Naive thymus-derived CD4-positive, alpha-beta T cell (primary cell): ENCODE measurements at regions of chr4 and their contacts with region 1.

Region 1: DNA sequence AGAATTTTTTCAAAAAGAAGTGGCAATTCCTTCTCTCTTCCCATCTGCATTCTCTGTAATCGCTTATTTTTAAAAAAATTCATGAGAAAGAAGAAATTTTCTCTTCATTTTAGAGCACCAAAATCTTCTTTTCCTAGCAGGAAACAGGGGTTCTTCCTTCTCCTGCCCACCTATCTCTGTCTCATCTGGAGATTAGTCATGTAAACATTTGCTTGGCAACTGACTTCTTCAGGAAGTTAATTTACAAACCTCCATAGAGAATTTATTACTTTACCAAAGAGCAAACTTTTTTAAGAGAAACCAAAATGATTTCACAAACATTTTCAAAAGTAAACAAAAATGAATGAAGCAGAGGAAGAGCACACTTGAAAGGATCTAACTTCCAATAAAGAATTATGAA is 13.6 kb downstream of the TTC29 start:
- DNase-seq: no peak
- ATAC-seq: no peak
- H3K4me3 ChIP-seq: no peak overlapping the region
- H3K4me3 Mint-ChIP-seq: no peak overlapping the region
- H3K27ac ChIP-seq: no peak overlapping the region
- H3K27ac Mint-ChIP-seq: no peak overlapping the region
- H3K4me1 ChIP-seq: no peaks in the 10 kb centered on the region
- H3K4me1 Mint-ChIP-seq: no peaks in the 10 kb centered on the region
- H3K27me3 ChIP-seq: no peaks in the 10 kb centered on the region
- H3K27me3 Mint-ChIP-seq: peaks cover 0 to 21% (median 12%) of the 10 kb centered on the region in 5 donors

Region 2: DNA sequence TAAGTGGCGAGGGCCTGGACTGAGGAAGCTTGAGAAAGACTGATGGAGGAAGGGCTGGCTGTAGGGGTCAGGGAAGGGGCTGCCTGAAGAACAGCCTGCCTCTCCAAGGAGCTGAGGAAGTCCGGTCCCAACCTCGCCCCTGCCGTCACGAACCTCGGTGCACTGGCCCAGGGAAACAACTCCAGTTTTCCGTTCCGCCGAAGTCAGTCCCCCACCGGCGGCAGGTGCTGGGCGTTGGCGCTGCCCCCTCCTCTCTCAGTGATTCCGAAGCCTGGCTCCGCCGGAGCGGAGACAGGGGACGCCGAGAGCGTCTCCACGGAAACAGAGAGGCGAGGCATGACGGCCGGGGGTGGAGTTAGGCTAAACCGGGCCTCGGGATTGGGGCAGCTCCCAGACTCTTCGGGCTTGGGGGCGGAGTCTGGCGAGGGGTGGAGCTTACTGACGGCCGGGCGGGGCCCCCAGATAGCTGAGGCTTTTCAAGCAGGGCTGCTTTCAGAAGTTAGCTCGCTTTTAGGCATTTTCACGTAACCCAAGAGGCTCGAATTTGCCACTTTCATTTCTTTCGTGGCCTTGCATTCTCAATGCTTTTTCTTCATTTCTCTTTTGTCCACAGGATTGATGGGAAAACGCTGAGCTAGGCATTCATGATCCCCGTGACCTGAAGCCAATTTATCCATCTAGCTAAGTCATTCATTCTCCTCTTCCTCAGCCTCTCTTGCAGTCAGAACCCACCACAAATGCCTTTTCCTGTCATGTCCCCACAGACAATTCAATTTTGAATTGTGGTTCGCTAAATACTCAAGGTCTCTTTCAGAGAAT is 13.7 kb after region 1 on chr4 and contains the start of gene TTC29:
- CTCF ChIA-PET with region 1: no interaction called
- POLR2A ChIA-PET with region 1: no interaction called
- intact Hi-C with region 1: loop called in 1 of 2 experiments (anchors 1 kb)
- DNase-seq: peak; percentile 63 to 86 (median 82)
- ATAC-seq: peak; percentile 99
- H3K4me3 ChIP-seq: peak within 1 kb of the TSS; percentile 52
- H3K4me3 Mint-ChIP-seq: peak within 1 kb of the TSS; percentile 78 to 96 (median 85)
- H3K27ac ChIP-seq: no peak within 1 kb of the TSS
- H3K27ac Mint-ChIP-seq: peak within 1 kb of the TSS in 7 of 9 donors; percentile 28 to 79 (median 59)
- H3K4me1 ChIP-seq: peaks cover 15 to 18% of the 10 kb centered on the region in 2 donors
- H3K4me1 Mint-ChIP-seq: peaks cover 9 to 38% (median 32%) of the 10 kb centered on the region in 7 donors
- H3K27me3 ChIP-seq: no peaks in the 10 kb centered on the region
- H3K27me3 Mint-ChIP-seq: peaks cover 7 to 64% (median 18%) of the 10 kb centered on the region in 5 donors
- total RNA-seq, gene TTC29: not detected

Region 3: GRCh38 chr4:147334478-147334877 is 402.4 kb after region 1 on chr4:
- CTCF ChIA-PET with region 1: no interaction called
- POLR2A ChIA-PET with region 1: no interaction called
- intact Hi-C with region 1: no loop called
- DNase-seq: no peak
- ATAC-seq: no peak
- H3K4me3 ChIP-seq: no peak overlapping the region
- H3K4me3 Mint-ChIP-seq: no peak overlapping the region
- H3K27ac ChIP-seq: no peak overlapping the region
- H3K27ac Mint-ChIP-seq: no peak overlapping the region
- H3K4me1 ChIP-seq: no peaks in the 10 kb centered on the region
- H3K4me1 Mint-ChIP-seq: no peaks in the 10 kb centered on the region
- H3K27me3 ChIP-seq: no peaks in the 10 kb centered on the region
- H3K27me3 Mint-ChIP-seq: no peaks in the 10 kb centered on the region